ENCODE measurements at regions of chr21 and their contacts with region 1.

Region 1: GRCh38 chr21:37366482-37367316 is at the start of gene DYRK1A:
- DNase-seq: peak; percentile 95 to 99 (median 99)
- ATAC-seq: peak; percentile 91
- H3K4me3 ChIP-seq: peak within 1 kb of the TSS; percentile 75
- H3K4me3 Mint-ChIP-seq: peak within 1 kb of the TSS; percentile 93 to 100 (median 100)
- H3K27ac ChIP-seq: peak within 1 kb of the TSS; percentile 99
- H3K27ac Mint-ChIP-seq: peak within 1 kb of the TSS; percentile 98 to 100 (median 100)
- H3K4me1 ChIP-seq: peaks cover 20 to 33% of the 10 kb centered on the region in 2 donors
- H3K4me1 Mint-ChIP-seq: peaks cover 34 to 53% (median 44%) of the 10 kb centered on the region in 7 donors
- H3K27me3 ChIP-seq: no peaks in the 10 kb centered on the region
- H3K27me3 Mint-ChIP-seq: peaks cover 0 to 5% (median 0%) of the 10 kb centered on the region in 5 donors
- total RNA-seq, gene DYRK1A: 86.0 to 142 (median 125) TPM

Region 2: GRCh38 chr21:36989699-36990507 is 376.8 kb before region 1 on chr21:
- CTCF ChIA-PET with region 1: no interaction called
- POLR2A ChIA-PET with region 1: no interaction called
- intact Hi-C with region 1: loop called in 1 of 2 experiments (anchors 10 kb)
- DNase-seq: peak; percentile 63 to 95 (median 74)
- ATAC-seq: peak; percentile 90
- H3K4me3 ChIP-seq: peak overlapping the region; percentile 66
- H3K4me3 Mint-ChIP-seq: peak overlapping the region; percentile 83 to 95 (median 90)
- H3K27ac ChIP-seq: peak overlapping the region; percentile 69
- H3K27ac Mint-ChIP-seq: peak overlapping the region; percentile 71 to 94 (median 87)
- H3K4me1 ChIP-seq: peaks cover 0 to 4% of the 10 kb centered on the region in 2 donors
- H3K4me1 Mint-ChIP-seq: peaks cover 4 to 36% (median 28%) of the 10 kb centered on the region in 7 donors
- H3K27me3 ChIP-seq: no peaks in the 10 kb centered on the region
- H3K27me3 Mint-ChIP-seq: peaks cover 0 to 3% (median 0%) of the 10 kb centered on the region in 5 donors

Region 3: DNA sequence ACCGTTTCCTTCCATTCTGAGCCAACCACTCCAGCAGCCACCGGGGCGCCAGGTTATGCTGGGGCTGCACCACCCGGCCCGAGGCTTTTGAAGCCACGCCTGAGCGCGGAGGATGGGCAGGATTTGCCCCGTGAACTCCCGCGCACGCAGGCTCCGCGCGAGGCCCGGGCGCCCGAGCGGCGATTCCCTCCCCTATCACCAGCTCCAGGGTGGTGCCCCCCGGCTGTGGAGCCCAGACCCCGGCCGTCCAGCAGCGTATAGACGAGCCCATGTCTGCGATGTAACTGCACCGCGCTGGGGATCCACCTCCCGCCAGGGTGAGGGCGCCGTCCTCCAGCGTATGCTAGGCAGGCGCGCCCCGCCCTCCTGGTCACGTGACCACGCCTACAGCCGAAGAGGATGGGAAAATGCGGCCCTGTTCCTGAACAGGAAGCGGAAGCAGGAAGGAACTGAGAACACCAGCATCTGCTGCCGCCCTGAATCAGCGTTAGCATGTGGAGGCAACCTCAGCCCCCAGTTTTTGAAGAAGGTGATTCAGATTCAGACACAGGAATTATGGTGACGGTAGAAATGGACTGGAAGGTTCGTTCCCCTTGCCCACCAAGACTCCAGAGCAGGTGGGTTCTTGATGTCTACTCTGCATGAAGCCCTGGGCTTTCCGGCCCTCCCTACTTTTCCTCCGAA is 145.6 kb before region 1 on chr21:
- CTCF ChIA-PET with region 1: no interaction called
- POLR2A ChIA-PET with region 1: interaction called, 4 read pairs
- intact Hi-C with region 1: loop called (anchors 1 to 2 kb)
- DNase-seq: peak; percentile 76 to 95 (median 88)
- ATAC-seq: peak; percentile 90
- H3K4me3 ChIP-seq: peak overlapping the region; percentile 83
- H3K4me3 Mint-ChIP-seq: peak overlapping the region; percentile 85 to 95 (median 92)
- H3K27ac ChIP-seq: peak overlapping the region; percentile 81
- H3K27ac Mint-ChIP-seq: peak overlapping the region; percentile 85 to 95 (median 91)
- H3K4me1 ChIP-seq: peaks cover 25 to 33% of the 10 kb centered on the region in 2 donors
- H3K4me1 Mint-ChIP-seq: peaks cover 17 to 65% (median 56%) of the 10 kb centered on the region in 7 donors
- H3K27me3 ChIP-seq: no peaks in the 10 kb centered on the region
- H3K27me3 Mint-ChIP-seq: no peaks in the 10 kb centered on the region

Region 4: DNA sequence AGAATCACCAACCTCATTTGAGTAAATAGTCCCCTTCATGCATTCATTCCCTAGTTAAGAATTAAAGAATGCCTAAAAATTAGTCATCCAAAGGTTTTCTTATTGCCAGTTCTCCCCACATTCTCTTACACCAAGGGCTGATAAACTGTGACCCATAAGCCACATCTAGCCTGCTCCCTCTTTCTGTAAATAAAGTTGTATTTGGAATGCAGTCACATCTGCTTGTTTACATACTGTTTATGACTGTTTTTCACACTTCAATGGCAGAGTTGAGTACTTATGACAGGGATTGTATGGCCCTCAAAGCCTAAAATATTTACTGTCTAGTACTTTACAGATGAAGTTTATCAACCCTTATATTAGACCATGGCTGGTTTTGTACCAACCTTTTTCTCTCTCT is 16.2 kb before region 1 on chr21:
- CTCF ChIA-PET with region 1: no interaction called
- POLR2A ChIA-PET with region 1: no interaction called
- intact Hi-C with region 1: no loop called
- DNase-seq: no peak
- ATAC-seq: no peak
- H3K4me3 ChIP-seq: no peak overlapping the region
- H3K4me3 Mint-ChIP-seq: no peak overlapping the region
- H3K27ac ChIP-seq: no peak overlapping the region
- H3K27ac Mint-ChIP-seq: no peak overlapping the region
- H3K4me1 ChIP-seq: no peaks in the 10 kb centered on the region
- H3K4me1 Mint-ChIP-seq: no peaks in the 10 kb centered on the region
- H3K27me3 ChIP-seq: no peaks in the 10 kb centered on the region
- H3K27me3 Mint-ChIP-seq: peaks cover 0 to 15% (median 7%) of the 10 kb centered on the region in 5 donors

Region 5: DNA sequence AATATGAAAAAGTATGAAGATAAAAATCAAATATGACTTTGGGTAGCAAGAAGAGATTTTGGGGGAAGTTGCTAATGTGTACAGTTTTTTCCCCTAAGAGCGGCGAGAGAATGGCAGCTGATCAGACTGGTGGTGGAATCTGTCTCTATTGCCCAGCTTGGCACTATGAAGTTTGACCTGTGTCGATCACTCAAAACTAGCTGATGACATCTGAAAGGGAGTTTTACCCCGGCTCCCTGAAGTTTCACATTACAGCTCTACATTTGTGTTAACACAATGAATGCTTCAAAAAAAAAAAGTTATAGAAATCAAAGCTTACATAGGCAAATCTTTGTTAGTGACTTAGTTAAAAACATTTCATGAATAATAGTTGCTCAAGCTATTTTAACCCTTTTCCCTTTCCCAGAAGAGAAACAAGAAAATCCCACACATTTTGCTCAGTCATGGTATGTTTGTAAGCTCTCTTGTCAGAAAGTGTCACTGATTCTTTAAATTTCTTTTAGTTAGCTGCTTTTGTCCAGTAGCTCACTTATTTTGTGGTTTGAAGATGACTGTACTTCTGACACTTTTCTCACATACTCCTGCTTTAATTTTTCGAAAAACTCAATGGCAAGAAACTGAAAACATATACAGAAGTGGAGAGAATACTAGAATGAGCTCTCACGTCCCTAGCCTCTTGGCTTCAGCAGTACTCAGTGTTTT is 41.2 kb after region 1 on chr21:
- CTCF ChIA-PET with region 1: no interaction called
- POLR2A ChIA-PET with region 1: interaction called, 3 read pairs
- intact Hi-C with region 1: loop called in 1 of 2 experiments (anchors 5 kb)
- DNase-seq: no peak
- ATAC-seq: no peak
- H3K4me3 ChIP-seq: no peak overlapping the region
- H3K4me3 Mint-ChIP-seq: peak overlapping the region in 9 of 10 donors; percentile 10 to 71 (median 42)
- H3K27ac ChIP-seq: no peak overlapping the region
- H3K27ac Mint-ChIP-seq: peak overlapping the region in 7 of 9 donors; percentile 33 to 76 (median 39)
- H3K4me1 ChIP-seq: peaks cover 58 to 71% of the 10 kb centered on the region in 2 donors
- H3K4me1 Mint-ChIP-seq: peaks cover 65 to 97% (median 93%) of the 10 kb centered on the region in 7 donors
- H3K27me3 ChIP-seq: no peaks in the 10 kb centered on the region
- H3K27me3 Mint-ChIP-seq: no peaks in the 10 kb centered on the region

Region 6: GRCh38 chr21:37463083-37463801 is 96.5 kb after region 1 on chr21:
- CTCF ChIA-PET with region 1: interaction called, 4 read pairs
- POLR2A ChIA-PET with region 1: interaction called, 4 read pairs
- intact Hi-C with region 1: loop called (anchors 2 kb)
- DNase-seq: peak in 6 of 9 donors; percentile 20 to 45 (median 31)
- ATAC-seq: peak; percentile 85
- H3K4me3 ChIP-seq: no peak overlapping the region
- H3K4me3 Mint-ChIP-seq: peak overlapping the region in 9 of 10 donors; percentile 3 to 80 (median 67)
- H3K27ac ChIP-seq: no peak overlapping the region
- H3K27ac Mint-ChIP-seq: peak overlapping the region; percentile 24 to 93 (median 81)
- H3K4me1 ChIP-seq: peaks cover 37 to 39% of the 10 kb centered on the region in 2 donors
- H3K4me1 Mint-ChIP-seq: peaks cover 56 to 98% (median 87%) of the 10 kb centered on the region in 7 donors
- H3K27me3 ChIP-seq: no peaks in the 10 kb centered on the region
- H3K27me3 Mint-ChIP-seq: no peaks in the 10 kb centered on the region